ENCODE measurements at regions of chr10 and their contacts with region 1.

Region 1: DNA sequence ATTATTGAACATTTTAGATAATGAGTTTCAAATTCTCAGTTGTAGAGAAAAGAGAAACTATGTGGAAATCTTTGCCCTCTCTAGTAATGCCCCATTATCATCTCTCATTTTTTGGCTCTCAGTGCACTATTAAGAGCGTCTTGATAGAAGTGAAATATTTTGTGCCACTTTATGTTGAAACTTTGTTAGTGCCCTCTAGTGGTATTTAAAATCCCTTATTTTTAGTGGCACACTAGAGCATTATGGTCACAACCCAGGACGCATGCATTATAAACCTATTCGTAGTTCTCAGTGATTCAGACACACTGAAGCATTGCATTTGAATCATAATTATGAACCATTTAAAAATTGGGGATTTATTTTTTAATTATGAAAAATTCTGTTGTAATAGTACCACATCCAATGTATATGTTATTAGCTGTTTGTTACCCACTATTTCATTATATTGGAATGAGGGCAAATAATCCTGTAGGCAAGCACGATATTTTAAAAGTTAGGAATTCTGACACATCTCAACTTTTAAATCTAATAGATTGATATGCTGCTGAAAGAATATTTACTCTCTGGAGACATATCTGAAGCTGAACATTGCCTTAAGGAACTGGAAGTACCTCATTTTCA is 21.9 kb downstream of the PDCD4 start:
- DNase-seq: peak; percentile 46
- ATAC-seq: peak; percentile 72
- H3K4me3 ChIP-seq: no peak overlapping the region
- H3K27ac ChIP-seq: no peak overlapping the region
- H3K4me1 ChIP-seq: peaks cover 6% of the 10 kb centered on the region
- H3K27me3 ChIP-seq: no peaks in the 10 kb centered on the region
- CTCF ChIP-seq: peak; percentile 52
- POLR2A ChIP-seq: no peak
- RAD21 ChIP-seq: peak; percentile 48

Region 2: GRCh38 chr10:110746254-110746826 is 147.3 kb before region 1 on chr10:
- CTCF ChIA-PET with region 1: interaction called, 4 read pairs
- POLR2A ChIA-PET with region 1: no interaction called
- dilution Hi-C with region 1: no loop called
- in situ Hi-C with region 1: loop called (anchors 10 kb)
- intact Hi-C with region 1: loop called (anchors 2 kb)
- DNase-seq: peak; percentile 71
- ATAC-seq: peak; percentile 90
- H3K4me3 ChIP-seq: no peak overlapping the region
- H3K27ac ChIP-seq: no peak overlapping the region
- H3K4me1 ChIP-seq: no peaks in the 10 kb centered on the region; the same call in 1 of the 2 replicates
- H3K27me3 ChIP-seq: peaks cover 5% of the 10 kb centered on the region
- CTCF ChIP-seq: peak; percentile 81
- POLR2A ChIP-seq: 0 out of 2 replicates have a peak, but pooled peaks have one; percentile 30
- RAD21 ChIP-seq: peak; percentile 90

Region 3: DNA sequence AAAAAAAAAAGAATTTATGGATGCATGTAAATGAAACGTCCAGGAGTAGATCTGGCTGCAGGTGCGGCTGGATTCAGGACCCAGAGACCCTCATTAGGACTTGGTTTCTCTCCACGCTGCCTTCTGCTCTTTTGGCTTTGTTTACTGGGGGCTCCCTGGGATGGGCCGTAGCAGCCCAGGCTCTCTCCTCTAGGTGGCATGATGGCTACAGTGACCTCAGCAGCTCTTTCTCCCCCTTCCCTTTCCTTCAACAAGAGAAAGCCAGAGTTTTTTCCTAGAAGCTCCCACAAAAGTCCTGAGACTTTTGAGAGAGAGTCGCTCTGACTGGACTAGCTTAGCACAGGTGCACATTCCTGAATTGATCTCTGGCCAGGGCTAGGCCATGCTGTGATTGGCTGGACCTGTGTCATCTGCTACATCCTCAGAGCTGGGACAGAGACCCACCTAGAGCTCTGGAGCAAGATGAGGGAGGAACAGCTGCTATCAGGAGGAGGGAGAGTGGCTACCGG is 89.8 kb before region 1 on chr10:
- CTCF ChIA-PET with region 1: interaction called, 11 read pairs
- POLR2A ChIA-PET with region 1: no interaction called
- dilution Hi-C with region 1: no loop called
- in situ Hi-C with region 1: no loop called
- intact Hi-C with region 1: no loop called
- DNase-seq: peak; percentile 24
- ATAC-seq: peak; percentile 70
- H3K4me3 ChIP-seq: no peak overlapping the region
- H3K27ac ChIP-seq: no peak overlapping the region
- H3K4me1 ChIP-seq: peaks cover 7% of the 10 kb centered on the region; the same call in 1 of the 2 replicates
- H3K27me3 ChIP-seq: peaks cover 5% of the 10 kb centered on the region
- CTCF ChIP-seq: peak; percentile 49
- POLR2A ChIP-seq: no peak
- RAD21 ChIP-seq: peak; percentile 53

Measured in IMR-90 (cell line).